Activated T-helper 2 cell treated with anti-CD3 and anti-CD28 coated beads, Interferon-gamma antibody, Interleukin-2, Interleukin-4, amounts not matched to agents 10 μg/mL and 5 μg/mL and 100 μg/mL, durations not matched to agents 14 hours and 24 hours and 36 hours (primary cell): ENCODE measurements at regions of chr12 and their contacts with region 1.

Region 1: DNA sequence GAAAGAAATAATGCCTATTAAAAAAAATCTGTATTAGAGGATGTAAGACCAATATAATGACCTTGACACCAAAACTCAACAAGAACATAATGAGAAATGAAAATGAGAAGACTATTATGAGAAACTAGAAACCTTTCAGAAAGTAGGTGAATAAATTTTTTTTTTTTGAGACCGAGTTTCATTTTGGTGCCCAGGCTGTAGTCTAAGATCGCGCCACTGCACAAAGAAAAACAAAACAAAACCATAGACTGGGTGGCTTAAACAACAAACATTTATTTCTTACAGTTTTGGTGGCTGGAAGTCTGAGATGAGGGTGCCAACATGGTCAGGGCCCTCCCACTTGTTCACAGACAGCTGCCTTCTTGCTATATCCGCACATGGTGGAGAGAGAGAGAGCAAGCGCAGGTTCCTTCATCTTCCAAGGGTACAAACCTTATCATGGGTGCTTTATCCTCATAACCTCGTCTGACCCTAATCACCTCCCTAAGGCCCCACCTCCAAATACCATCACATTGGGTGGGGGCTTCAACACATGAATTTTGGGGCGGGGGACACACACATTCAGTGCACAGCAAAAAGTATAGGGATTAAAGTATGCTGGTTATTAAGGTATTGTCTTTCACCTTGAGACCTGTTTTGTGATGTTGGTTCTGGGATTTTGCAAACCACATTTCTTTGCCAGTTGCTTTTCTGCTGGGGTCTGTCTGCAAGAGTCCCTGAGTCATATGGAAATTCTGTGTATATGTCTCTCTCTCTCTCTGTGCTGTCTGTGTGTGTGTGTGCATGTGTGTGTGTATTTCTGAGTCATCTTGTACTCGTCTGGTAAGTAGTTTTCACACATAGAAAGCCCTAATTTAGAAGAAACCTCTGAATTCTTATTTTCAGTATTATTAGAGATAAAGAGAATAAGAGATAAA is 26.2 kb downstream of the ZCRB1 start:
- DNase-seq: peak; percentile 41
- H3K4me3 Mint-ChIP-seq: no peak overlapping the region
- H3K27ac Mint-ChIP-seq: peak overlapping the region; percentile 81
- H3K4me1 Mint-ChIP-seq: peaks cover 12% of the 10 kb centered on the region
- H3K27me3 Mint-ChIP-seq: no peaks in the 10 kb centered on the region

Region 2: GRCh38 chr12:42261708-42262107 is 37.9 kb before region 1 on chr12:
- intact Hi-C with region 1: loop called (anchors 5 kb)
- DNase-seq: no peak
- H3K4me3 Mint-ChIP-seq: no peak overlapping the region
- H3K27ac Mint-ChIP-seq: no peak overlapping the region
- H3K4me1 Mint-ChIP-seq: peaks cover 16% of the 10 kb centered on the region
- H3K27me3 Mint-ChIP-seq: peaks cover 3% of the 10 kb centered on the region

Region 3: GRCh38 chr12:42315108-42315507 is 15.5 kb after region 1 on chr12:
- intact Hi-C with region 1: no loop called
- DNase-seq: no peak
- H3K4me3 Mint-ChIP-seq: no peak overlapping the region
- H3K27ac Mint-ChIP-seq: no peak overlapping the region
- H3K4me1 Mint-ChIP-seq: no peaks in the 10 kb centered on the region
- H3K27me3 Mint-ChIP-seq: no peaks in the 10 kb centered on the region

Region 4: DNA sequence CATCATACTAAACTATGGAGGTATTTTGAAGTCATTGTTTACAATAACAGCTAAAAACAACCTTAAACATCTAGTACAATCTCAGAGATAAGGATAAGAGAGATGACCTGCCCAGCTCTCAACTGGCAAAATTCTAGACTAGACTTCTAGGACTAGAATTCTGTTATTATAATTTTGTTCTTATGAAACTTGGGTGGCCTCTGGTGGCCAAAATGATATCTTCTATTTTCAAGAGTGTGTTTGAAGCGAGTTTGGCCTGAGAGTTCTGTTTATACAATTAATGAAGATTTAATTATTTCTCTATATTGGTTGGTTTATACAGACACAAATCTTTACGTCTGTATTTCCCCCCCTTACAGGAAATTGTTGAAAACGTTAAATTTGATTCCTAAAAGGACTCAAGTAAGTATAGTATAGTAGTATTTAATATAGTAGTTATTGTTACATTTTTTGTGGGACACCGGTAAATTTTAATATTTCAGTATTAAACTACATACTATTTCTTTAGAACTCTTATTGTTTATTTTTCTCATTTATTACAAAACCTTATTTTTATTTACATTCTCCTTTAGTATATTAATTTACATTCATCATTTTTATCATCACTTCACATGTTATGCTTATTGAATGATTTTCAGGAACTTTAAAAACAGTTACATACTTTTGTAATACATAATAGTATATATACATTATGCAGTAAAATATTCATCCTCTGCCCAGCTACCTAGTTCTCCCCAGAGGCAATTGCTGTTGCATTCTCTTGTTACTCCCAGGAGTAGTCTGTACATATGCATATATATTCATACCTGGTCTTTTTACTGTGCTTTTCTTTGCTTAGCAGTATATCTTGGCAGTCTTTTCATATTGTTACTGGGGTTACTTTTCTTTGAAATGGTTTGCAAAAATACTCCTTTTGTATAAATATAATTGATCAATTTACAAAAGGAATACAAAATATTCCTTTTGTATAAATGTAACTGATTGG is 32.9 kb after region 1 on chr12:
- intact Hi-C with region 1: no loop called
- DNase-seq: no peak
- H3K4me3 Mint-ChIP-seq: no peak overlapping the region
- H3K27ac Mint-ChIP-seq: no peak overlapping the region
- H3K4me1 Mint-ChIP-seq: peaks cover 41% of the 10 kb centered on the region
- H3K27me3 Mint-ChIP-seq: no peaks in the 10 kb centered on the region

Region 5: GRCh38 chr12:42360747-42361403 is 61.2 kb after region 1 on chr12:
- intact Hi-C with region 1: loop called (anchors 1 kb)
- DNase-seq: no peak
- H3K4me3 Mint-ChIP-seq: no peak overlapping the region
- H3K27ac Mint-ChIP-seq: peak overlapping the region; percentile 60
- H3K4me1 Mint-ChIP-seq: peaks cover 23% of the 10 kb centered on the region
- H3K27me3 Mint-ChIP-seq: no peaks in the 10 kb centered on the region